Naive thymus-derived CD4-positive, alpha-beta T cell (primary cell): ENCODE measurements at regions of chr6 and their contacts with region 1.

Region 1: DNA sequence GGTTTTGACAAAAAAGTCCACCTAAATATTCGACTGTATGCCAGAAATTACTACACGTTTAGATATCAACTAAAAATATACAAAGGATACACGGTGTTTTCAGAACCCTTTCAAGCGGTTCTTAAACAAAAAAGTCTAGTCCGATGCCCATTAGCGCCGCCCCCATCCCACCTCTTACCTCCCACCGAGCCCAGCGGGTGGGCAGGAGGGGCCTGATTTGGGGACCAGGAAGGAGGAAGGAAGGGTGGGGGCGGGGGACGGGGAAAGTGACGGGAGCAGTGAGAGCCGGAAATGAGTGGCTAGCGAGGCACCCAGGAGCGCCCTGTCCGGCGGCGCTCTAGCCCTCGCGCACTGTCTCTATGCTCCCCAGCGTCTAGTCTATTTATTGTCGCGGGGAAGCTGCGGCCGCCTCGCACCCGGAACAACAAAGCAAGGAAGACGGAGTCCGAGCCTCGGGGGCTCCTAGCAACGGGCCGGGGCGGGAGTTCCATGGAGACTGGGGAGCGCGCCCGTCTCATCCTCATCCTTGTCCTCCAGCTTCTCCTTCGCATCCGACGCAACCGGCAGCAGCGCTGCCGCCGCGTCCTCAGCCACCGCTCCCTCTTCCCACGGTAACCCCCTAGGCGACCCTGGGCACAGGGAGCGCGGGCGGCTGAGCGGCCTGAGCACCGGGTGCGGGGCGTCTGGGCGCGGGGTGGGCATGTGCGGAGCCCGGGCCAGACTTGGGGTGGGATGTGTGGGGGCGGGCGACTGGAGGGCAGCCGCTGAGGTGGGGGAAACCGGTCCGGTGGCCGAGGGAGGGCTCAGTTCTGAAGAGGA is at the start of gene TBPL1:
- DNase-seq: peak; percentile 60 to 81 (median 78)
- ATAC-seq: peak; percentile 95
- H3K4me3 ChIP-seq: peak within 1 kb of the TSS; percentile 85
- H3K4me3 Mint-ChIP-seq: peak within 1 kb of the TSS; percentile 96 to 100 (median 98)
- H3K27ac ChIP-seq: peak within 1 kb of the TSS; percentile 81
- H3K27ac Mint-ChIP-seq: peak within 1 kb of the TSS; percentile 83 to 99 (median 95)
- H3K4me1 ChIP-seq: peaks cover 10 to 25% of the 10 kb centered on the region in 2 donors
- H3K4me1 Mint-ChIP-seq: peaks cover 32 to 53% (median 45%) of the 10 kb centered on the region in 7 donors
- H3K27me3 ChIP-seq: no peaks in the 10 kb centered on the region
- H3K27me3 Mint-ChIP-seq: peaks cover 0 to 10% (median 0%) of the 10 kb centered on the region in 5 donors
- total RNA-seq, gene TBPL1: 21.0 to 34.7 (median 25.4) TPM

Region 2: DNA sequence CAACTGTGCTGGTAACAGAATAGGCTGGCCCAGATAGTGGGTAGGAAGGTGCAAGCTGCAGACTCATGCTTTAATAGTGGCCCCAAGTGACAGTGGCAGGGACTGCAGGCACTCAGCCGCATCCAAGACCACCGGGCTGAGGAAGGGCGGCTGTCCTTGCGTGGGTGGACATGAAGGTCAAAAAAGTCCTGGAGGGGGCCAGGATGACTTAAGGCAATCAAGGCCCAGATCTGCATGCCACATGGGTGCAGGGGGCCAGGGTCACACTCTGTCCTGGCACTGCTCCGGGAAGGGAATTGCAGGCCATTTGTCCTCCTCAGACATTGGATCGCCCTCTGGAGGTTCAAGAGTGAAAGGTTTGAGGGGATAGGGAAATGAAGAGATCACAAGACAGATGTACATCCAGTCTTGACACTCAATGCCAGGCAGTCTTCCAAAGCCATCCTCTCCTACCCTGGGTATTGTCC is 1184.9 kb before region 1 on chr6:
- CTCF ChIA-PET with region 1: no interaction called
- POLR2A ChIA-PET with region 1: no interaction called
- intact Hi-C with region 1: loop called in 1 of 2 experiments (anchors 5 kb)
- DNase-seq: peak in 6 of 9 donors; percentile 7 to 23 (median 11)
- ATAC-seq: peak; percentile 79
- H3K4me3 ChIP-seq: no peak overlapping the region
- H3K4me3 Mint-ChIP-seq: no peak overlapping the region
- H3K27ac ChIP-seq: no peak overlapping the region
- H3K27ac Mint-ChIP-seq: peak overlapping the region in 2 of 9 donors; percentile 14 to 40
- H3K4me1 ChIP-seq: peaks cover 8 to 9% of the 10 kb centered on the region in 2 donors
- H3K4me1 Mint-ChIP-seq: peaks cover 13 to 20% (median 15%) of the 10 kb centered on the region in 7 donors
- H3K27me3 ChIP-seq: no peaks in the 10 kb centered on the region
- H3K27me3 Mint-ChIP-seq: peaks cover 0 to 2% (median 0%) of the 10 kb centered on the region in 5 donors

Region 3: GRCh38 chr6:133973109-133973971 is 20.3 kb after region 1 on chr6:
- CTCF ChIA-PET with region 1: interaction called, 11 read pairs
- POLR2A ChIA-PET with region 1: interaction called, 3 read pairs
- intact Hi-C with region 1: loop called (anchors 1 kb)
- DNase-seq: peak in 7 of 9 donors; percentile 16 to 53 (median 43)
- ATAC-seq: peak; percentile 79
- H3K4me3 ChIP-seq: no peak overlapping the region
- H3K4me3 Mint-ChIP-seq: no peak overlapping the region
- H3K27ac ChIP-seq: no peak overlapping the region
- H3K27ac Mint-ChIP-seq: peak overlapping the region in 2 of 9 donors; percentile 45 to 79
- H3K4me1 ChIP-seq: peaks cover 0 to 6% of the 10 kb centered on the region in 2 donors
- H3K4me1 Mint-ChIP-seq: peaks cover 16 to 67% (median 59%) of the 10 kb centered on the region in 7 donors
- H3K27me3 ChIP-seq: no peaks in the 10 kb centered on the region
- H3K27me3 Mint-ChIP-seq: no peaks in the 10 kb centered on the region

Region 4: GRCh38 chr6:134195164-134195906 is 242.3 kb after region 1 on chr6:
- CTCF ChIA-PET with region 1: no interaction called
- POLR2A ChIA-PET with region 1: no interaction called
- intact Hi-C with region 1: no loop called
- DNase-seq: no peak
- ATAC-seq: no peak
- H3K4me3 ChIP-seq: no peak overlapping the region
- H3K4me3 Mint-ChIP-seq: no peak overlapping the region
- H3K27ac ChIP-seq: no peak overlapping the region
- H3K27ac Mint-ChIP-seq: peak overlapping the region in 1 of 9 donors; percentile 45
- H3K4me1 ChIP-seq: no peaks in the 10 kb centered on the region
- H3K4me1 Mint-ChIP-seq: peaks cover 5 to 47% (median 21%) of the 10 kb centered on the region in 7 donors
- H3K27me3 ChIP-seq: no peaks in the 10 kb centered on the region
- H3K27me3 Mint-ChIP-seq: no peaks in the 10 kb centered on the region

Region 5: GRCh38 chr6:134640975-134641429 is 688.0 kb after region 1 on chr6:
- CTCF ChIA-PET with region 1: no interaction called
- POLR2A ChIA-PET with region 1: no interaction called
- intact Hi-C with region 1: loop called in 1 of 2 experiments (anchors 2 kb)
- DNase-seq: peak; percentile 33 to 82 (median 74)
- ATAC-seq: peak; percentile 97
- H3K4me3 ChIP-seq: no peak overlapping the region
- H3K4me3 Mint-ChIP-seq: peak overlapping the region in 1 of 10 donors; percentile 12
- H3K27ac ChIP-seq: no peak overlapping the region
- H3K27ac Mint-ChIP-seq: peak overlapping the region in 4 of 9 donors; percentile 5 to 44 (median 29)
- H3K4me1 ChIP-seq: peaks cover 0 to 7% of the 10 kb centered on the region in 2 donors
- H3K4me1 Mint-ChIP-seq: peaks cover 1 to 34% (median 27%) of the 10 kb centered on the region in 7 donors
- H3K27me3 ChIP-seq: no peaks in the 10 kb centered on the region
- H3K27me3 Mint-ChIP-seq: peaks cover 0 to 3% (median 0%) of the 10 kb centered on the region in 5 donors

Region 6: DNA sequence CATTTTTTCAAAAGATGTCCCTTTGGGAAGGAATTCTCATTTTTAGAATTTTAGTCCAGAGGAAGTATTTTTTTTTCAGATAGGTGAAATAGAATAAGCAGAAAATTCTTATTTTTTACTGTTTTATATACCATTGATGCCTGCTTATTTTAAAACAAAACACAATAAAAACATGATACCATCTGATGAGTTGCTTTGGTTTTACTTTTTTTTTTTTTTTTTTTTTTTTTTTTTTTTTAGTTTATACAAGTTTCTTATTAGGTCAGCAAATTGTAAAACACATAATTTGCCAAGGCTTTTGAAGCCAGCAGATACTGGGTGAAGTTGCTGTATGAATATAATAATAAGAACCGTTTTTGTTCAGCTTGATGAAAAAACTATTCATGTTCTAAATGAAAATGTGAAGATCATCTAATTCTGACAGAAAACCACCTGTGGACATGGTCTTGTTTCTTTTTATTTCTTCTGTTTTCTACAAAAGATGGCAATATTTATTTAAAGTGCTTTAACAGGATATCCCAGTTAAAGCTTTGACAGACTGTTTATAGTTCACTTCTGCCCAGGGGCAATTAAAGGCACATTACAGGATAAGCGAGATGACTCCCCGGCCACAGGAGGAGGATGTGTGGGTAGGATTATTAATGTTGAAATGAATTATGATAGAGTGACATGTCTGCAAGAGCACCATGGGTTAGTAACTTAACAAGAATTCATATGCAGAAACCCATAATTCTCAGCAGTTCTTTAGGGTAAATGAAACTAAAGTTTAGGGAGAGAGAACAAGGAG is 1259.2 kb after region 1 on chr6:
- CTCF ChIA-PET with region 1: no interaction called
- POLR2A ChIA-PET with region 1: no interaction called
- intact Hi-C with region 1: loop called in 1 of 2 experiments (anchors 10 kb)
- DNase-seq: no peak
- ATAC-seq: no peak
- H3K4me3 ChIP-seq: peak overlapping the region; percentile 2
- H3K4me3 Mint-ChIP-seq: peak overlapping the region; percentile 5 to 82 (median 66)
- H3K27ac ChIP-seq: no peak overlapping the region
- H3K27ac Mint-ChIP-seq: peak overlapping the region; percentile 9 to 88 (median 69)
- H3K4me1 ChIP-seq: peaks cover 0 to 26% of the 10 kb centered on the region in 2 donors
- H3K4me1 Mint-ChIP-seq: peaks cover 20 to 48% (median 41%) of the 10 kb centered on the region in 7 donors
- H3K27me3 ChIP-seq: no peaks in the 10 kb centered on the region
- H3K27me3 Mint-ChIP-seq: no peaks in the 10 kb centered on the region